Left cardiac atrium (tissue), 4 donors: ENCODE measurements at regions of chr3 and their contacts with region 1.

Region 1: GRCh38 chr3:187745201-187746058 is at the start of gene BCL6:
- DNase-seq: peak; percentile 94
- ATAC-seq: peak; percentile 71 to 80
- total RNA-seq, gene BCL6: 91.7 to 113 TPM

Region 2: DNA sequence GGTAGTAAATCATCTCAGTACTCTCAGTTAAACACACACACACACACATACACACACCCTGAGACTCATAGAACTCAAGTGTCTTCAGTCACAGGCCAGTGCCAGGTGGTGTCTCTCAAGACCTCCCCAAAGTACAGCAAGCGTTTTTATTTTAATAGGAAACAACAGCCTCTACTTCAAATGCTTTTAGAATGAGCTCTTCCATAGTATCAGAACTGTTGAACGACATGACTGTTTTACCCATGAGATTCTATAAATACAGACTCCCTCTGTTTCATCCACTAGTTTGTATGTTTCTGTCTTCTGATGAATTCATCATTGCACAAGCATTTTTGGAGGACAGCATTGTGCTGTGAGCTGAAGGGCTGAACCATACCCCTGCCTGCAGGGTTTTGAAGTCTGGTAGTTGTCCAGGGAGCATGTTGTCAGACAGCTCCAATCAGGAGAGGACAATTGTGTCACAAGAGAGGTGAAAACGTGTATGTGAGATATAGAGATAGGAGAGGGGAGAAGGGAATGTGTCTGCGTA is 200.8 kb after region 1 on chr3:
- intact Hi-C with region 1: loop called (anchors 5 to 10 kb)
- DNase-seq: no peak
- ATAC-seq: peak; percentile 23 to 52

Region 3: DNA sequence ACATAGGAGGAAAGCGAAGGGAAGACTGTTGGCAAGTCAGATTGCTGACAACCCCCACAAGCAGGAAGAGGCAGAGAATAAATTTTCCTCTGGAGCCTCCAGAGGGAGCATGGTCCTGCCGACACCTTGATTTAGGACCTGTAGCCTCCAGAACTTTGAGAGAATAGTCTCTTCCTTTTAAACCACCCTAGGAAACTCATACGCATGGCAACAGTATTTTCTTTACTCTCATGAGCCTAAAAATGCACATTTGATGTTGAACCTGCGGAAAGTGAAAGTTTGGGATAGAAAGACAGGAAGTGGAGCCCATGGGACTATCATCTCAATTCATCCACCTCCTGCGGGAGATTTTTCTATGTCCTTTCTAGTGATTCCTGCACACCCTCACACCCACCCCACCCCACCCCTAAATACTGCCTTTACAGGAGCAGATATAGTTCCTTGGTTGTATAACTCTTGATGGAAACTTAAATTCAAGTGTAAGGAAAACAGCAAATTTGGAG is 291.8 kb after region 1 on chr3:
- intact Hi-C with region 1: loop called (anchors 5 to 10 kb)
- DNase-seq: no peak
- ATAC-seq: peak; percentile 81 to 87

Region 4: DNA sequence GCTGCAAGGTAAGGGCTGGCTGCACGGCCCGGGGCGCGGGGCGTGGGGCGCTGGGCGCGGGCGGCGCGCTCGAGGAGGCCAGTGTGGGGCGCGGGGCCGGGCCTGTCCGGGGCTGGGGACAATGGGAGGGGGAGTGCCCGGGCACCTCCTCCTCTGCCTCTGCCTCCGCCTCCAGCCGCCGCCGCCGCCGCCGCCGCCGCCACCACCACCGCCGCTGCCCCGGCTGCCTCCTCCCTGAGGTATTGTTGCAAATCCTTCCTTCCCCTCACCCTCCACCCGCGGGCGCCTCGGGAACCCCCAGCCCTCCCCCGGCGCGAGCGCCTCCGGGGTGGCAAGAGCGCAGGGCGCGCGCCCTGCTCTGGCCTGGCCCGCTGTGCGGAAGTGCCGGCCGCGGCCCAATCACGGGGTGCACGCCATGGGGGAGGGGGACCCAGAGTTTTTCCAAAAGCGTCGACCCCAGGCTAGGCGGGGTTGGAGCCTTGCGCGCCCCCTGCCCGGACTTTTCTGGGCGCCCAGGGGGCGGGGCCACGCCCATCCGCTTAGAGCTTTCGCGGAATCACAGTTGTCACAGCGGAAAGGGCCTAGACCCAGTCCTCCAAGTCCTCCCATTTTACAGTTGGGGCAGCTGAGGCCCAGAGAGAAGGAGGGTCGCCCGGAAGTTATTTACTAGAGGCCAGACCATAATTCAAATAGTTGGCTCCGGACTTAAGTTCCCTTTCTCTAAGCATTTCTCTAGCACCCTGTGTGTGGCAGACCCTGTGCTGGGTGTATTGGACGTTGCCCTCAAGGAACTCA is 408.8 kb after region 1 on chr3 and contains the start of gene LPP:
- intact Hi-C with region 1: loop called (anchors 2 to 10 kb)
- DNase-seq: peak; percentile 80
- ATAC-seq: peak; percentile 88 to 93
- total RNA-seq, gene LPP: 152 to 181 TPM

Region 5: GRCh38 chr3:188262913-188263683 is 517.7 kb after region 1 on chr3:
- intact Hi-C with region 1: loop called (anchors 10 kb)
- DNase-seq: no peak
- ATAC-seq: peak; percentile 50 to 80

Region 6: GRCh38 chr3:188788621-188789081 is 1043.2 kb after region 1 on chr3:
- intact Hi-C with region 1: loop called in 1 of 2 experiments (anchors 10 kb)
- DNase-seq: no peak
- ATAC-seq: peak in 1 of 2 donors; percentile 78